Right cardiac atrium (tissue), 5 donors: ENCODE measurements at regions of chr9 and their contacts with region 1.

Region 1: GRCh38 chr9:69985971-69986370 is 57.7 kb upstream of the MAMDC2 start:
- DNase-seq: no peak
- ATAC-seq: no peak
- H3K4me3 ChIP-seq: no peak overlapping the region
- H3K27ac ChIP-seq: no peak overlapping the region
- H3K4me1 ChIP-seq: no peaks in the 10 kb centered on the region
- H3K27me3 ChIP-seq: no peaks in the 10 kb centered on the region

Region 2: GRCh38 chr9:70020991-70021571 is 35.1 kb after region 1 on chr9:
- intact Hi-C with region 1: loop called in 1 of 4 experiments (anchors 2 kb)
- DNase-seq: peak; percentile 82 to 95 (median 87)
- ATAC-seq: peak; percentile 62 to 64
- H3K4me3 ChIP-seq: no peak overlapping the region
- H3K27ac ChIP-seq: no peak overlapping the region
- H3K4me1 ChIP-seq: peaks cover 2% of the 10 kb centered on the region
- H3K27me3 ChIP-seq: no peaks in the 10 kb centered on the region